T-cell (primary cell): ENCODE measurements at regions of chr1 and their contacts with region 1.

Region 1: DNA sequence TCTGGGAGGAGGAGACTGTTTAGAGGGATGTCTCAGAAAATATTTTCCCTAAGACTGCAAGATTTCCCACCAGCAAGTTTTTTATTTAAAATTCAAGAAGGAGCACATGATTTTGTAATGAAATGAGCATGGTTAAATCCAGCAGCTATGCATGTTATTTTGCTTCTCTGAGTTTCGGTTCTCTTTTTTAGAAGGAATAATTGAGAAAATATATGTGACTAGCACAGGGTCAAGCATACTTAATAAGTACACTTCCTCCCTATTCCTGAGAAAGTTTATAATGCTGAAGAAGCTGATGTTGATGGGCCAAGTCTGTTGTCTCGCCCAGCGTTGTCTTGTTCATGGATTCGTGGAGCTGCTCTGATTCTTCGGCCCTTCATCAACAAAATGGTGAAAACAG is 51.2 kb downstream of the EXO1 start:
- DNase-seq: no peak
- ATAC-seq: no peak
- H3K4me3 ChIP-seq: no peak overlapping the region
- H3K4me3 Mint-ChIP-seq: no peak overlapping the region
- H3K27ac ChIP-seq: no peak overlapping the region
- H3K27ac Mint-ChIP-seq: no peak overlapping the region
- H3K4me1 ChIP-seq: no peaks in the 10 kb centered on the region
- H3K4me1 Mint-ChIP-seq: no peaks in the 10 kb centered on the region
- H3K27me3 ChIP-seq: no peaks in the 10 kb centered on the region
- H3K27me3 Mint-ChIP-seq: no peaks in the 10 kb centered on the region

Region 2: DNA sequence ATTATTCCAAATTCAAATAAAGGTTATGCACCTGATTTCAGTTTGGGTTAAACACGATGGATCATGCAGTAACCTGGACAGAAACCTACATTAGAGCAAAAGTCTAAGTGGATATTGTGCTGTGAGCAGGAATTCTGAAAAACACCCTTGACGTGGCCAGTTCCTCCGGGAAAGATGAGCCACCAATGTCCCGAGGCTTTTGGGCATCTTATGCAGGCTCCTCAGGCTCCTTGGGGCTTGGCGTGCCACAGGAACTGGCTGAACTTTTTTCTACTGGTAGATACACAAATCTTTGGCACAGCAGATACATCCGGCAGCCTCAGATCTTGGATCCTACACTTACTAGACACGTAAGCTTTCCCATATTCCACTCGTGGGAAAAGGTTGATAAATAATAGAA is 332.6 kb before region 1 on chr1:
- CTCF ChIA-PET with region 1: no interaction called
- POLR2A ChIA-PET with region 1: no interaction called
- DNase-seq: no peak
- ATAC-seq: no peak
- H3K4me3 ChIP-seq: no peak overlapping the region
- H3K4me3 Mint-ChIP-seq: no peak overlapping the region
- H3K27ac ChIP-seq: no peak overlapping the region
- H3K27ac Mint-ChIP-seq: no peak overlapping the region
- H3K4me1 ChIP-seq: no peaks in the 10 kb centered on the region
- H3K4me1 Mint-ChIP-seq: no peaks in the 10 kb centered on the region
- H3K27me3 ChIP-seq: peaks cover 0 to 3% of the 10 kb centered on the region in 2 experiments
- H3K27me3 Mint-ChIP-seq: peaks cover 0 to 5% of the 10 kb centered on the region in 2 donors

Region 3: GRCh38 chr1:241688940-241689368 is 210.3 kb before region 1 on chr1:
- CTCF ChIA-PET with region 1: no interaction called
- POLR2A ChIA-PET with region 1: interaction called in 1 of 2 experiments, 12 read pairs
- DNase-seq: no peak
- ATAC-seq: no peak
- H3K4me3 ChIP-seq: no peak overlapping the region
- H3K4me3 Mint-ChIP-seq: no peak overlapping the region
- H3K27ac ChIP-seq: no peak overlapping the region
- H3K27ac Mint-ChIP-seq: no peak overlapping the region
- H3K4me1 ChIP-seq: no peaks in the 10 kb centered on the region
- H3K4me1 Mint-ChIP-seq: peaks cover 0 to 9% (median 0%) of the 10 kb centered on the region in 3 donors
- H3K27me3 ChIP-seq: no peaks in the 10 kb centered on the region
- H3K27me3 Mint-ChIP-seq: peaks cover 0 to 7% of the 10 kb centered on the region in 2 donors

Region 4: DNA sequence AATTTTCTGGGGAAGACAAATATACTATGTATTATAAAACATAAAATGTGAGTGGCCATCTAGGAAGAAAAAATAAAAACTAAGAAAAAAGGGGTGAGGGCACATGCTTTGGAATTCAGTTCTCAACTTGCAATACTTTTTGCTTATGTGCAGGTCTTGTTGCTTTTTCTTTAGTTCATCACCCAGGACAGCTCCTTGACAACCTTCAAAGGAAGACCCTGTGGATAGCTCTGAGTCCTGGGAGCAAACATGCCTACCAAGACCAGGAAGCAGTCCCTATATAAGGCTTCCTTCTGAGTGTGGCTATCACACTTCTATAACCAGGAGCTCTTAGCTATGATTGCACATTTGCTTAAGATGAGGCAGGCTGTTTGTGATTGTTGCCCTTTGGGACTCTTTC is 169.2 kb before region 1 on chr1:
- CTCF ChIA-PET with region 1: no interaction called
- POLR2A ChIA-PET with region 1: no interaction called
- DNase-seq: no peak
- ATAC-seq: no peak
- H3K4me3 ChIP-seq: no peak overlapping the region
- H3K4me3 Mint-ChIP-seq: no peak overlapping the region
- H3K27ac ChIP-seq: no peak overlapping the region
- H3K27ac Mint-ChIP-seq: no peak overlapping the region
- H3K4me1 ChIP-seq: no peaks in the 10 kb centered on the region
- H3K4me1 Mint-ChIP-seq: peaks cover 0 to 2% (median 0%) of the 10 kb centered on the region in 3 donors
- H3K27me3 ChIP-seq: peaks cover 2 to 9% of the 10 kb centered on the region in 2 experiments
- H3K27me3 Mint-ChIP-seq: peaks cover 0 to 1% of the 10 kb centered on the region in 2 donors